ENCODE measurements at regions of chr16 and their contacts with region 1.

Region 1: DNA sequence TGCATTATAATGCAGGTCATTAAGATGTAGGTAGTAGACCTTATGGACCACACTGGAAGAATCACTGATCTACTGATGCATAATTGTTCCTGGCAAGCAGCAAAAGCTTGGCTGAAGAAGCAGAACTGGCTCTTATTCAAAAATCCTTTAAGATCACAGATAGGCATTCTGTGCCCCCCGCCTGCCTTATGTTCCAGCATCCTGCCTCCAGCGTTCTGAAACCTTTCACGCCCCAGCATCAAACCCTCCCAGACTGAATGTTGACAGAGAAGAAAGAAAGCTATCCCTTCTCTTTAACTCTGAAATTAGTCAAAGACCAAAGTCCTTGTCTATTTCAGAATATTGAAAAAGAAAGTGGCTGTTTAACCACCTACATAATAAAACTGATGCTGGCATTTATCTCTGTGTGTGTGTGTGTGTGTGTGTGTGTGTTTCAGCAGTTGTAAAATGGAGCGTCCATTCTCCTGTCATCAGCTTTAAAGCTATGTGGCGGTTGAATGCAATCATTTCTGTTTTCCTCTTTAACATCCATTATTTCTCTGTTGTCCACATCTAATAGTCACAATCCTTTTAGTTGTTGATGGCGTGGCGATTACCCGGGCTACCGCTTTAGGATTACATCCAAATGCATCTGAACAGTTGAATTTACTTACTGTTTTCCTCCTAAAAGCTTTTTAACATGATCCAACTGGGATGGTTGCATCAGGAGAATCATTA is 350.4 kb downstream of the HS3ST4 start:
- DNase-seq: no peak
- H3K4me3 ChIP-seq: no peak overlapping the region
- H3K27ac ChIP-seq: no peak overlapping the region
- H3K4me1 ChIP-seq: no peaks in the 10 kb centered on the region
- H3K27me3 ChIP-seq: no peaks in the 10 kb centered on the region
- CTCF ChIP-seq: no peak

Region 2: GRCh38 chr16:25988084-25988483 is 54.0 kb before region 1 on chr16:
- intact Hi-C with region 1: loop called (anchors 10 kb)
- DNase-seq: no peak
- H3K4me3 ChIP-seq: no peak overlapping the region
- H3K27ac ChIP-seq: no peak overlapping the region
- H3K4me1 ChIP-seq: no peaks in the 10 kb centered on the region
- H3K27me3 ChIP-seq: no peaks in the 10 kb centered on the region
- CTCF ChIP-seq: no peak

Region 3: DNA sequence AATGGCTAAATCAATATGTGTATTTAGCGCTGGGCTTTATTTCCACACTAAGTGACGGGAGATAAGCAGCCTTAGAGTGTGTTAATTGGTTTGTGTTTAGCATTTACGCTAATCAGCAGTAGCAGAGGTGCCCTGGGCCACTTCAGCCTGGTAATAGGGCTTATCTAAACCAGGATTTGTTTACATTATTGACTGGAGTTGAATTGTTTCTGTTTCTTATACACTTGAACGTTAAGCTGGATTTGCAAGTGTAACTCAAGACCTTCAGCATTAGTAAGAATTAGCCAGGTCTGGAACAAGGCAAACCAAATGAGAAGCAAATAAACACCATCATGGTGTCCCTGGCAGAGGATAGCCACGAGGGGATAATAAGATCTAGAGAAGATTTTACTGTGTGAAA is 36.8 kb before region 1 on chr16:
- intact Hi-C with region 1: no loop called
- DNase-seq: no peak
- H3K4me3 ChIP-seq: no peak overlapping the region
- H3K27ac ChIP-seq: no peak overlapping the region
- H3K4me1 ChIP-seq: no peaks in the 10 kb centered on the region
- H3K27me3 ChIP-seq: no peaks in the 10 kb centered on the region
- CTCF ChIP-seq: no peak